ENCODE measurements at regions of chr11 and their contacts with region 1.

Region 1: DNA sequence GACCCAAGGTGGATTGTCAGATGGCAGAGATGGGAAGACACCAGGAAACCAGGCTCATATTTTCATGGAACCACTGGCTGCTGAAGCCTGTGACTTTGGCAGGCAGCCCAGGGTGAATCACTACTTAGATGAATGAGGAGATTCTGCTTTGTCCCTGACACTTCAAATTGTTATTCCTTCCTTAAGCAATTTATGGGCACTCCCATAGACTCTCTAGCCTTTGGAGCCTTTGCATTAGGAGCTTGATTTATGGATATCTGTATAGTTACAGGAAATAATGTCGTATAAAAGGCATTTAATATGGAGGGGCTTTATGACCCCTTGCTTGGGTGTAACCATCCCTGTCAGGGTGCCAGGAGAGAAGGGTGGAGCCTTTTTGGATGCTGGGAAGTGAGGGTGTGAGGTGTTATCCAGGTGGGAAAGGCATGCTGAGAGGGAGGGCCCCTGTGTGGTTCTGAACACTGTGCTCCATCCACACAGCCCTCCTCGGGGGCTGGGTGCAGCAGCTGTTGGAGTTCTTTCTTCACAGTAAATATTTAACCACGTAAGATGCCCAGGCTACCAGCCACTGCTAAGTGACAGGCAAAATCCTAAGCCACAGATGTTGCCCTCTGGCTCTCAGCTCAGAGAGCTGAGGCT is 35.3 kb downstream of the IL18 start:
- DNase-seq: no peak
- H3K4me3 ChIP-seq: no peak overlapping the region
- H3K27ac ChIP-seq: peak overlapping the region in 1 of 4 donors; percentile 17
- H3K4me1 ChIP-seq: peaks cover 0 to 12% (median 11%) of the 10 kb centered on the region in 4 donors
- H3K27me3 ChIP-seq: no peaks in the 10 kb centered on the region
- CTCF ChIP-seq: no peak
- EP300 ChIP-seq: no peak
- POLR2A ChIP-seq: no peak

Region 2: GRCh38 chr11:112074026-112074811 is 54.4 kb before region 1 on chr11 and contains the start of gene NKAPD1:
- intact Hi-C with region 1: no loop called
- DNase-seq: peak; percentile 94
- H3K4me3 ChIP-seq: peak within 1 kb of the TSS; percentile 77 to 91 (median 84)
- H3K27ac ChIP-seq: peak within 1 kb of the TSS; percentile 82 to 91 (median 88)
- H3K4me1 ChIP-seq: peaks cover 18 to 34% (median 22%) of the 10 kb centered on the region in 4 donors
- H3K27me3 ChIP-seq: no peaks in the 10 kb centered on the region
- CTCF ChIP-seq: peak in 1 of 3 experiments; percentile 18
- EP300 ChIP-seq: no peak
- POLR2A ChIP-seq: no peak
- total RNA-seq, gene NKAPD1: 13.7 to 20.4 (median 16.1) TPM

Region 3: GRCh38 chr11:112166546-112166945 is 37.9 kb after region 1 on chr11:
- intact Hi-C with region 1: loop called (anchors 5 kb)
- DNase-seq: no peak
- H3K4me3 ChIP-seq: no peak overlapping the region
- H3K27ac ChIP-seq: no peak overlapping the region
- H3K4me1 ChIP-seq: no peaks in the 10 kb centered on the region
- H3K27me3 ChIP-seq: no peaks in the 10 kb centered on the region
- CTCF ChIP-seq: no peak
- EP300 ChIP-seq: no peak
- POLR2A ChIP-seq: no peak

Region 4: GRCh38 chr11:112179601-112180000 is 51.0 kb after region 1 on chr11:
- intact Hi-C with region 1: no loop called
- DNase-seq: no peak
- H3K4me3 ChIP-seq: no peak overlapping the region
- H3K27ac ChIP-seq: no peak overlapping the region
- H3K4me1 ChIP-seq: peaks cover 3 to 30% (median 27%) of the 10 kb centered on the region in 4 donors
- H3K27me3 ChIP-seq: no peaks in the 10 kb centered on the region
- CTCF ChIP-seq: no peak
- EP300 ChIP-seq: no peak
- POLR2A ChIP-seq: no peak